Dendritic cell treated with granulocyte-macrophage colony-stimulating factor and Interleukin-4, amounts not matched to agents 40 ng/mL and 50 ng/mL, for 4 days (primary cell): ENCODE measurements at regions of chr2 and their contacts with region 1.

Region 1: GRCh38 chr2:29495536-29496060 is 380.4 kb downstream of the CLIP4 start:
- H3K4me3 Mint-ChIP-seq: no peak overlapping the region
- H3K27ac Mint-ChIP-seq: no peak overlapping the region
- H3K4me1 Mint-ChIP-seq: peaks cover 8% of the 10 kb centered on the region
- H3K27me3 Mint-ChIP-seq: no peaks in the 10 kb centered on the region

Region 2: DNA sequence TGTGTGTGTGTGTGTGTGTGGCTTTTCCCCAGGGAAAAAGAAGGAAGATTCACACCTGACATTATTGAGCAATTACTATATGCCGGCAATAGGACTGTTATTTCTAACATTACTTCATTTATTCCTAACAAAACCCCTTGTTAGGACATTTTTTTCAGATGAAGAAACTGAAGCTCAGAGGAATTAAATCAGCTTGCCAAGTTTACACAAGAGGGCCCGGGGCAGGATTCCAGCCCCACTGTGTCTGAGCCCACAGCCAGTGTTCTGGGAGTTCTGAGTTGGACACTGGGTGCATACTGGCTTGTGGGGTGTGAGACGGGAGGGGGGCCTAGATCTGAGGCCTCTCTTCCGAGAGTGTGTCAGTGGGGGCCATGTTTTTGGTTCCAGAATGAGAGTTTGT is 504.6 kb before region 1 on chr2:
- intact Hi-C with region 1: loop called (anchors 10 kb)
- H3K4me3 Mint-ChIP-seq: no peak overlapping the region
- H3K27ac Mint-ChIP-seq: peak overlapping the region; percentile 26
- H3K4me1 Mint-ChIP-seq: peaks cover 38% of the 10 kb centered on the region
- H3K27me3 Mint-ChIP-seq: no peaks in the 10 kb centered on the region